Upper lobe of right lung (tissue), 1 donor: ENCODE measurements at regions of chr1 and their contacts with region 1.

Region 1: DNA sequence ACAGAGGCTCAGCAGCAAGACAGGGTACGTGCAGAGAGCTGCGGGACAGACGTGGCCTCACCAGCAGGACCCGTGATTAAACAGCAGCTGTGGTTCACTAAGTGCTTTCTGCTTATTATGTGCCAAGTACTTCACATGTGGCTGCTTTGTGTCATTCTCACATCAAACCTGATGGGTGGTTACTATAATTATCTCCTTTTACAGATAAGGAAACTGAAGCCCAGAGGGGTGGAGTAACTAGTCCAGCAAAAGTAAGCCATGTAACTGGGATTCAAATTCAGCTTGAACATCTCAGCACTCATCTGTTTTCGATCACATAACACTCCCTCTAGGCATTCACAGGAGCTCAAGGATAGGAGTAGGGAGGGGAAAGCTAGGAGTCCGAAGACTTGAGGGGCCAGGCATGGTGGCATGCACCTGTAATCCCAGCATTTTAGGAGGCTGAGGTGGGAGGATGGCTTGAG is 50.8 kb upstream of the CLIC4 start:
- DNase-seq: no peak
- ATAC-seq: peak; percentile 74
- H3K4me3 ChIP-seq: no peak overlapping the region
- H3K27ac ChIP-seq: peak overlapping the region; percentile 74
- H3K4me1 ChIP-seq: peaks cover 36% of the 10 kb centered on the region
- H3K27me3 ChIP-seq: no peaks in the 10 kb centered on the region
- CTCF ChIP-seq: no peak

Region 2: GRCh38 chr1:24744911-24745710 is 50.7 kb after region 1 on chr1 and contains the start of gene CLIC4:
- intact Hi-C with region 1: loop called (anchors 10 kb)
- DNase-seq: peak; percentile 100
- ATAC-seq: peak; percentile 98
- H3K4me3 ChIP-seq: peak within 1 kb of the TSS; percentile 82
- H3K27ac ChIP-seq: peak within 1 kb of the TSS; percentile 88
- H3K4me1 ChIP-seq: peaks cover 11% of the 10 kb centered on the region
- H3K27me3 ChIP-seq: no peaks in the 10 kb centered on the region
- CTCF ChIP-seq: no peak
- total RNA-seq, gene CLIC4: 200 TPM